ENCODE measurements at regions of chr2 and their contacts with region 1.

Region 1: GRCh38 chr2:387980-388421 is 100.1 kb upstream of the ALKAL2 start:
- DNase-seq: no peak
- H3K4me3 ChIP-seq: no peak overlapping the region
- H3K27ac ChIP-seq: no peak overlapping the region
- H3K4me1 ChIP-seq: peaks cover 33% of the 10 kb centered on the region
- H3K27me3 ChIP-seq: no peaks in the 10 kb centered on the region
- CTCF ChIP-seq: no peak

Region 2: GRCh38 chr2:182509-183122 is 205.4 kb before region 1 on chr2:
- CTCF ChIA-PET with region 1: no interaction called
- POLR2A ChIA-PET with region 1: no interaction called
- intact Hi-C with region 1: no loop called
- DNase-seq: no peak
- H3K4me3 ChIP-seq: no peak overlapping the region
- H3K27ac ChIP-seq: no peak overlapping the region
- H3K4me1 ChIP-seq: peaks cover 5% of the 10 kb centered on the region
- H3K27me3 ChIP-seq: no peaks in the 10 kb centered on the region
- CTCF ChIP-seq: no peak

Region 3: GRCh38 chr2:437762-438393 is 49.9 kb after region 1 on chr2:
- CTCF ChIA-PET with region 1: no interaction called
- POLR2A ChIA-PET with region 1: no interaction called
- intact Hi-C with region 1: loop called (anchors 2 kb)
- DNase-seq: peak; percentile 61 to 89
- H3K4me3 ChIP-seq: peak overlapping the region; percentile 13; the same call in 1 of the 2 replicates
- H3K27ac ChIP-seq: peak overlapping the region; percentile 67
- H3K4me1 ChIP-seq: peaks cover 13% of the 10 kb centered on the region; the same call in 1 of the 2 replicates
- H3K27me3 ChIP-seq: no peaks in the 10 kb centered on the region
- CTCF ChIP-seq: no peak

Measured in PC-9 (cell line).